CD14-positive monocyte (primary cell): ENCODE measurements at regions of chr6 and their contacts with region 1.

Region 1: GRCh38 chr6:32118782-32119628 is 9.0 kb downstream of the ATF6B start:
- DNase-seq: peak; percentile 59 to 73 (median 68)
- H3K4me3 ChIP-seq: no peak overlapping the region
- H3K4me3 Mint-ChIP-seq: no peak overlapping the region
- H3K27ac ChIP-seq: peak overlapping the region in 1 of 2 donors; percentile 63
- H3K27ac Mint-ChIP-seq: peak overlapping the region in 5 of 7 donors; percentile 57 to 87 (median 75)
- H3K4me1 ChIP-seq: peaks cover 7 to 14% of the 10 kb centered on the region in 2 donors
- H3K4me1 Mint-ChIP-seq: peaks cover 16% of the 10 kb centered on the region
- H3K27me3 ChIP-seq: no peaks in the 10 kb centered on the region
- H3K27me3 Mint-ChIP-seq: peaks cover 0 to 5% (median 0%) of the 10 kb centered on the region in 3 donors
- CTCF ChIP-seq: peak; percentile 91

Region 2: GRCh38 chr6:32195652-32195901 is 76.6 kb after region 1 on chr6:
- intact Hi-C with region 1: loop called in 1 of 2 experiments (anchors 5 kb)
- DNase-seq: peak; percentile 100
- H3K4me3 ChIP-seq: peak overlapping the region in 2 of 3 experiments; percentile 46 to 98
- H3K4me3 Mint-ChIP-seq: peak overlapping the region in 1 of 2 donors; percentile 84
- H3K27ac ChIP-seq: peak overlapping the region; percentile 98 to 99
- H3K27ac Mint-ChIP-seq: peak overlapping the region; percentile 98 to 100 (median 100)
- H3K4me1 ChIP-seq: peaks cover 53 to 62% of the 10 kb centered on the region in 2 donors
- H3K4me1 Mint-ChIP-seq: peaks cover 56% of the 10 kb centered on the region
- H3K27me3 ChIP-seq: no peaks in the 10 kb centered on the region
- H3K27me3 Mint-ChIP-seq: peaks cover 0 to 10% (median 2%) of the 10 kb centered on the region in 3 donors
- CTCF ChIP-seq: no peak